ENCODE measurements at regions of chr14 and their contacts with region 1.

Region 1: GRCh38 chr14:99982537-99983250 is 82.5 kb upstream of the EVL start:
- DNase-seq: peak; percentile 55 to 58
- H3K4me3 ChIP-seq: no peak overlapping the region
- H3K27ac ChIP-seq: peak overlapping the region in 1 of 2 donors; percentile 30
- H3K4me1 ChIP-seq: no peaks in the 10 kb centered on the region
- H3K27me3 ChIP-seq: no peaks in the 10 kb centered on the region
- CTCF ChIP-seq: peak; percentile 85 to 93 (median 90)
- POLR2A ChIP-seq: no peak

Region 2: GRCh38 chr14:100096570-100096971 is 113.9 kb after region 1 on chr14:
- intact Hi-C with region 1: no loop called
- DNase-seq: no peak
- H3K4me3 ChIP-seq: no peak overlapping the region
- H3K27ac ChIP-seq: no peak overlapping the region
- H3K4me1 ChIP-seq: no peaks in the 10 kb centered on the region
- H3K27me3 ChIP-seq: no peaks in the 10 kb centered on the region
- CTCF ChIP-seq: no peak
- POLR2A ChIP-seq: no peak

Region 3: DNA sequence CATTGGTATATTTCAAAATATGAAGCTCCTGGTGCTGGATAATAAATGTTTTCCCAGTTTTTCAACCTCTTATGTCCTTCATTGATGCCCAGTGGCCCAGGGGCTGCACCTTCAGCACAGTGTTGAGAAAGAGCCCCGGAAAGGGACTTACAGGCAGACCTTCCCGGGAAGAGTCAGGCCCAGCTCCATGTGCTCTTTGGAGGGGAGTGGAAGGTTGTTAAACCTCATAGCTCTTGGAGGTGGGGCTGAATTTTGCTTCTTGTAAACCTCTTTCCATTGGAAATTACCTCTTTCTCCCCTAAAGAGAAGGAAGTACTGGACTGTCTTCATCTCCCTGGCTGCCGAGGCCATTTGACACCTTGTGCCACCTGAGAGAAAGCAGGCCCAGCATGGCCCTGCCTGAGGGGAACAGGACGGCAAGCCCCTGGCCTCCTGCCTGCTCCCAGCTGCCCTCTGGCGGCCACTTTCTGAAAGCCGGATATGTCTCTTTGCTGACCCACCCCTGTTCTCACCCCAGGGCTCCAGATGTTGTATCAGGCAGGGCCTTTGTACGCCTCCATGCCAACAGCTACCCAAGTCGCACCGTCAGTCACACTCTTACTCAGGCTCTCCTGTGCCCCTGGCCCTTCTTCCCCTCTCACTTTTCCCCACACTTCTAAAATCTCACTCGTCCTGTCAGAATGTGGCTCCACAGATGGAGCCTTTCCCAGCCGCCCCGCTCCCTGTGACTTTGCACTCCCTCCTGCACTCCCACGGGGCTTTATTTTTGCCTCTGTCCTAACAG is 125.5 kb after region 1 on chr14:
- intact Hi-C with region 1: loop called (anchors 5 kb)
- DNase-seq: peak; percentile 81 to 84
- H3K4me3 ChIP-seq: no peak overlapping the region
- H3K27ac ChIP-seq: peak overlapping the region; percentile 38 to 51
- H3K4me1 ChIP-seq: peaks cover 0 to 20% of the 10 kb centered on the region in 2 donors
- H3K27me3 ChIP-seq: no peaks in the 10 kb centered on the region
- CTCF ChIP-seq: peak; percentile 79 to 90 (median 86)
- POLR2A ChIP-seq: no peak

Region 4: GRCh38 chr14:100173353-100173752 is 190.7 kb after region 1 on chr14:
- intact Hi-C with region 1: loop called (anchors 10 kb)
- DNase-seq: no peak
- H3K4me3 ChIP-seq: no peak overlapping the region
- H3K27ac ChIP-seq: no peak overlapping the region
- H3K4me1 ChIP-seq: no peaks in the 10 kb centered on the region
- H3K27me3 ChIP-seq: no peaks in the 10 kb centered on the region
- CTCF ChIP-seq: no peak
- POLR2A ChIP-seq: no peak

Measured in uterus (tissue), 4 donors.